Prostate gland (tissue), 2 donors: ENCODE measurements at regions of chr17 and their contacts with region 1.

Region 1: GRCh38 chr17:51153210-51154072 is at the start of gene NME1:
- DNase-seq: peak; percentile 98
- H3K4me3 ChIP-seq: peak within 1 kb of the TSS; percentile 42 to 67
- H3K27ac ChIP-seq: peak within 1 kb of the TSS; percentile 87 to 88
- H3K4me1 ChIP-seq: no peaks in the 10 kb centered on the region
- H3K27me3 ChIP-seq: no peaks in the 10 kb centered on the region
- CTCF ChIP-seq: peak; percentile 33 to 91 (median 86)
- POLR2A ChIP-seq: peak; percentile 20
- total RNA-seq, gene NME1: 32.3 to 75.1 TPM

Region 2: DNA sequence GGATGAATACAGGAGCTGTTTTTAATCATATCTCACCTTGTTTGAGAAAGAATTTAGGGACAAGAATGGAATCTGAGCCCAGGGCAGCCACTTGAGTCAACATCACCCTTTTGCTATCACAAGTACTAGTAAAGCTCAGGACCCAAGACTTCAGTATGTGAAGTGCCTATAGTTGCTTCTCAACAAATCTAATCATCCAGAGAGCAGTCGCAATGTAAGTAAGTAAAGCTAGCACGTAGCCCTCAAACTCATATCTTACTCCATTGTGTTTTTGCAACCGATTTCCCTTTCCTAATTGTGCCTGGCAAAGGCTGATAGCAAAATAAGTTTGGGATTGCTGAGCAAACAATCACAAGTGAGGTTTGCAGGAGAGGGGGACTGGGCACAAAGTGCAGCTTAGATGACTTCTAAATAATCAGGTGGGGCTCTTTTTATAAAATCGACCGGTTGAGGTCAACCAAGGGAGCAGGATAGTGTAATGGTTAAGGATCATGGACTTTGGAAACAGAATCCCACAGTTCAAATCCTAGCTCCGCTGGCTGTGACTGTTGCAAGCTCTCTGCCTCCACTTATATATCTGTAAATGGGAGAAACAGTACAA is 300.3 kb before region 1 on chr17:
- intact Hi-C with region 1: loop called (anchors 5 kb)
- DNase-seq: no peak
- H3K4me3 ChIP-seq: no peak overlapping the region
- H3K27ac ChIP-seq: peak overlapping the region in 1 of 2 donors; percentile 59
- H3K4me1 ChIP-seq: peaks cover 2% of the 10 kb centered on the region
- H3K27me3 ChIP-seq: no peaks in the 10 kb centered on the region
- CTCF ChIP-seq: no peak
- POLR2A ChIP-seq: no peak

Region 3: DNA sequence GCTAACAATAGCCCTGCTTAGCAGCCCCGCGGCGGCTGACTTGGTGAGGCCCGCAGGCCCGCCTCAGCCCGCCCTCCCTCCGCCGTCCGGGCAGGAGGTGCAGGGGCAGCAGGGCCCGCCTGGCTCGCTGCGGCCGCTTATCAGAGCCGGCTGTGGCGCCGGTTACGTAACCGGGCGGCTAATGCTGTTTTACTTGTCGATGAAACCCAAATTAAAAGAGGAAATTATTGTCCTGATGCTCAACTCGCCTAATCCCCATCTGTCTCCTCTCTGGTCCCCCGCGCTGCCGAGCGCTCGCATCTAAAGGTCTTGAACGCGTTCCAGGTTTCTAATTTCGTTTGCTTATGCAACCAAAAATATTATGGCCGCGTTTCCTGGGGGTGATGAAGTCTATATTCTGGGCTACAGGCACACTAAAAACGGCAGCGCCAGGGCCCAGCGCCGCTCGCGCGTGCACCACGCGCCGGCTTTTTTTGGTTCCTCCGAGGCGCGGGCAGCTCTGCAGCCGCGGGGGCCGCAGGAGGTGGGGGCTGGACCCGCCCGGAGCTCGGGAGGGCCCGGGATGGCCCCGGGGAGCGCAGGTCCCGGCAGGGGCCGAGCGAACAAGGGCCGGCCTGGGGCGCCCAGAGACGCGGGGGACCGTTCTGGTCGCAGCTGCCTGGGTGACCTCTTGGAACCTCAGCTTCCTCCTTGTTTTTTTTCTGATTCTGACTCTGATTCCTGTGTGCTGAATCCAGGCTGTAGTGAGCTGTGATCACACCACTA is 222.1 kb before region 1 on chr17:
- intact Hi-C with region 1: no loop called
- DNase-seq: peak; percentile 61
- H3K4me3 ChIP-seq: peak overlapping the region; percentile 26 to 30
- H3K27ac ChIP-seq: peak overlapping the region; percentile 75 to 90
- H3K4me1 ChIP-seq: no peaks in the 10 kb centered on the region
- H3K27me3 ChIP-seq: no peaks in the 10 kb centered on the region
- CTCF ChIP-seq: no peak
- POLR2A ChIP-seq: no peak

Region 4: DNA sequence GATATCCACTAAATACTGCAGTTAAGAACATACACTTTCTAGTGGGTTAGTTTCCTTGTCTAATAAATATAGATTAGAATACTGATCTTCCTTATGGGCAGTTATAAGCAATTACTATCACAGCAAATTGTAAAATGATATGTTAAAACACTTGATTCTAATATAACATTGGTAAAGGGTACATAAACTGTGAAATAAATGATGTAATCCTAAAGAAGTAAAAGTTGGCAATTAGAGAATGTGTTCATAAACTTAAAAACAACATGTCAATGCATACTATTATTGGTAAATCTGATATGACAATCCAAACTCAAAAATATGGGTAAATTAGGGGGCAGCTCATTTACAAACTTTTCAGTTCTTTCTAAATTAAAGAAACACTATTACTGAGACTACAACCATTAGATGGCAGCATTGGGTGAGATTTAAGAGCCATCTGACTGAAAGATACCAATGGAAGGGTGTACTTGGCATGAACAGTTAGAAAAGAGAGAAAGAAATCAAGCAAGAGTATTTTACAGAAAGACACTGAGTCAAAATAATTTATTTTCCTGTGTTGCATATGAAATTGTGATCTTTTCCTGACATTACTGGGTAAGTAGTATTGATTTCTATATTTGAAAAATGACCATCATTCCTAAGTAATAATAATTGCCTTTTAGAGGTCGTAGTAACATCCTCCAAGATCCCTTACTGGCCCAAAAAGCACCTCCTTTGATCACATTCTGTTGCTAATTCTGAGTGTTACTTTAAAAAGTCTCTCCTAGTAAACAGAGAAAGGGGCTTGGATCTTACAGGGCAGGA is 152.4 kb before region 1 on chr17:
- intact Hi-C with region 1: loop called (anchors 2 kb)
- DNase-seq: peak; percentile 20
- H3K4me3 ChIP-seq: no peak overlapping the region
- H3K27ac ChIP-seq: no peak overlapping the region
- H3K4me1 ChIP-seq: no peaks in the 10 kb centered on the region
- H3K27me3 ChIP-seq: no peaks in the 10 kb centered on the region
- CTCF ChIP-seq: peak in 3 of 4 experiments; percentile 59 to 76 (median 76)
- POLR2A ChIP-seq: no peak

Region 5: DNA sequence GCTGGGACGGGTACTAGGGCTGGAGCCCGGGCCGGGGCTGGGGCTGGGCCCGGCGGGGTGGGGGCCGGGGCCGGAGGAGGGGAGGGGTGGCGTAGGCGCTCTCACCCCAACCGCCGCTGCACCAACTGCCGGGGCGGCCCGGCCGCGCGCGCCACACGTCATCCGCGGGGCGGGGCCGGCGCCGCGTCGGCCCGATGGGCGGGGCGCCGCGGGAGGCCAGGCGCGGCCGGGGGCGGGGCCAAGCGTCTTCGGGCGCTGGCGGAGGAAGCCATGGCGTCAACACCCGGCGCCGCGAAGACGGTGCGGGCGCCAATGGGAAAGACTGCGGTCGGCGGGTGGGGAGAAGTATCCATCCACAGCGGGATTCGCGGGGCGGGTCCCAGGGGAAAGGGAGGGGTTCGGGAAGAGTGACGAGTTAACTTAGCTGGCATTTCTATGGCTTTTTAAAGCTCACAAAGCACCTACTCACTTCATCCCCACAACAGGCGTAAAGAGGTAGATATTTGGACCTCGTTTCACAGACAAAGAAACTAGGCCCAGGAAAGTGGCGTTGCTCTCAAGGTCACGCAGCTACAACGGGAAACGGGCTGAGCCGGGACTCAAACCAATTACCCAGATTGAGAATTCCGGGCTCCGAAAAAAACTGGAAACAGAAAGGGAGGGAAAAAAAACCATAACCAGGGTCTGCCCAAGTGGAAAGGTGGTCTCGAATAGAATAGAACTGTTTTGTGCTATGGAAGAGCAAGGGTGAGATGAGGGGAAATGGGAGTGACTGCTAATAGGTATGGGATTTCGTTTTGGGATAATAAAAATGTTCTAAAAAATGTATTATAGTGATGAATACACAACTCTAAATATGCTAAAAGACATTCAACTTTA is 32.5 kb before region 1 on chr17 and contains the start of gene SPAG9:
- intact Hi-C with region 1: loop called (anchors 2 kb)
- DNase-seq: peak; percentile 94
- H3K4me3 ChIP-seq: peak within 1 kb of the TSS; percentile 93 to 100
- H3K27ac ChIP-seq: peak within 1 kb of the TSS; percentile 99 to 100
- H3K4me1 ChIP-seq: peaks cover 3% of the 10 kb centered on the region
- H3K27me3 ChIP-seq: no peaks in the 10 kb centered on the region
- CTCF ChIP-seq: peak in 1 of 4 experiments; percentile 23
- POLR2A ChIP-seq: peak; percentile 82
- total RNA-seq, gene SPAG9: 48.3 to 98.3 TPM